GM12878 (cell line): ENCODE measurements at regions of chr6 and their contacts with region 1.

Region 1: DNA sequence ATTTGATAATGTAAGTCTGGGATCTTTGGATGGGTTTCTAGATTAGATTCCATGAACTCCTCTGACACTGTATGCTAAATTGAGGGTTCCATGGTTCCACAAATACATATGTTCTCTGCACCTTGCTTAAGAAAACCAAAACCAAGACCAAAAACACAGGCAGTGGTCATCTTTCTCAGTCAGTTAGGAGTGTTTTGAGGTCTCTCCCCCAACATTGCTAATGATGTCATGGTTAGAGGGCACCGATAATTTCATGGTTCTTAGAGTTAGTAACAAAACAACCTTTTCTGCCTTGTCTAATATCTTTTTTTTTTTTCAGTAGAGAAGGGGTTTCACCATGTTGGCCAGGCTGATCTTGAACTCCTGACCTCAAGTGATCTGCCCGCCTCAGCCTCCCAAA is 44.5 kb downstream of the ARID1B start:
- DNase-seq: no peak
- ATAC-seq: peak; percentile 68
- H3K4me3 ChIP-seq: no peak overlapping the region
- H3K27ac ChIP-seq: no peak overlapping the region
- H3K4me1 ChIP-seq: peaks cover 30% of the 10 kb centered on the region
- H3K27me3 ChIP-seq: no peaks in the 10 kb centered on the region
- CTCF ChIP-seq: no peak
- EP300 ChIP-seq: no peak
- POLR2A ChIP-seq: no peak
- RAD21 ChIP-seq: no peak

Region 2: GRCh38 chr6:156687789-156688619 is 133.7 kb before region 1 on chr6:
- CTCF ChIA-PET with region 1: no interaction called
- POLR2A ChIA-PET with region 1: no interaction called
- RAD21 ChIA-PET with region 1: no interaction called
- SMC1A ChIA-PET with region 1: no interaction called
- in situ Hi-C with region 1: no loop called
- intact Hi-C with region 1: no loop called
- DNase-seq: no peak
- ATAC-seq: peak; percentile 30
- H3K4me3 ChIP-seq: peak overlapping the region; percentile 69
- H3K27ac ChIP-seq: peak overlapping the region; percentile 98
- H3K4me1 ChIP-seq: peaks cover 51% of the 10 kb centered on the region
- H3K27me3 ChIP-seq: no peaks in the 10 kb centered on the region
- CTCF ChIP-seq: no peak; a peak in 1 of 6 replicates
- EP300 ChIP-seq: no peak
- POLR2A ChIP-seq: no peak
- RAD21 ChIP-seq: peak; percentile 26; the same call in 1 of the 2 replicates

Region 3: DNA sequence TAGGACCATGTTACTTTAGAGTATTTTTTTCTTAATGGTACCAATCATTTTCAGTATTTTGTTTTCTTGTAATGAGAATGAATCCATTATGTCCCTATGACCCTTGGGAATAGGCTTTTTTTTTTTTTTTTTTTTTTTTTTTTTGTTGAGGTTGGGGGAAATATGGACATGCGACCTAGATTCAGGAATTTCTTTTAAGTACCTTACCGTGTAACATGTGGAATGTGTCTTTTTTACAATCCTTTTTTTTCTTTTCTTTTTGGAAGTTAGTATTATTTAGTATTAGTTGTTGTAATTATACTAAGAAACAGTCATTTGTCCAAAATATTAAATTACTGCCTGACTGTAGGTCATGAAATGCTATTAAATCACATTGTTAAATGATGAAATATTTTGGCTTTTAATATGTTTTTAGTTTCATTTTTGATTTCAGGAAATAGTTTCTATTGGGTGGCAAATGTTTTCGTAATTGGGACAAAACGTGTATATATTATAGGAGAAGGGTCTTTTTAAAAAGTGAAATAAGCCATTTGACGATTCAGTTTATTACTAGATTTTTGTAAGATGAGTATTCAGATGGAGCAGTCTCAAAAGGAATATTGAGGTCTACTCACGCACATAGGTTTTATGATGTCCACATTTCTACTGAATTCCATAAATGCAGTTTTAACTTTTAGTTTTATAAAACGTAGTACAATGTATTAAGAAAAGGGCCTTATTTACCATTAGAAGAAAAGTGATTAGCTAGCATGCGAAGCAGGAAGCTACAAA is 39.7 kb before region 1 on chr6:
- CTCF ChIA-PET with region 1: interaction called, 5 read pairs
- POLR2A ChIA-PET with region 1: interaction called, 4 read pairs
- RAD21 ChIA-PET with region 1: interaction called, 11 read pairs
- SMC1A ChIA-PET with region 1: interaction called, 20 read pairs
- in situ Hi-C with region 1: no loop called
- intact Hi-C with region 1: no loop called
- DNase-seq: no peak
- ATAC-seq: no peak
- H3K4me3 ChIP-seq: peak overlapping the region; percentile 89
- H3K27ac ChIP-seq: peak overlapping the region; percentile 93
- H3K4me1 ChIP-seq: peaks cover 6% of the 10 kb centered on the region; the same call in 1 of the 2 replicates
- H3K27me3 ChIP-seq: no peaks in the 10 kb centered on the region
- CTCF ChIP-seq: no peak
- EP300 ChIP-seq: no peak
- POLR2A ChIP-seq: no peak
- RAD21 ChIP-seq: no peak

Region 4: DNA sequence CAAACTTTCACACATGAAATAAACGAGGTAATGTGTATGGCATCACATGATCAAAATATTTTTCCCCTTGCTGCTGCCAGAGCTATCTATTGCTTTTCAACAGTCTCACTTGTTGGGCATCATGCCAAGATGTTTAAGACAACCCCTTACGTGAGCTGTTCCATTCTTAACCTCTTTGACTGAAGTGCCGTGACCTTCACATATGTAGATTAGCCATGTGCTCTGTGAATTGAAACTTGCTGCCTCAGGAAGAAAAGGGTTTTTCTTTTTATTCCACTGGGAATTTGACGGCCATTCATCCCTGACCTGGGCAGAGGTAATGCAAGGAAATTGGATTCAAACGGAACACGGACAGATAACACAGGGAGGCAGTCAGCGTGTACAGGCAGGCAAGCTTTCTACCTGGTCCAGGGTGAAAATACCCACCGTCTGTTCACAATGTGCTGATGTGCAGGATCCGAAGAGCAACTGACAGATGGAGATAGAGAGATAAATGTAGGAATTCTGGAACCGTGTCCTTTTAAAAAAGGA is 30.3 kb before region 1 on chr6:
- CTCF ChIA-PET with region 1: interaction called, 5 read pairs
- POLR2A ChIA-PET with region 1: interaction called, 4 read pairs
- RAD21 ChIA-PET with region 1: interaction called, 12 read pairs
- SMC1A ChIA-PET with region 1: interaction called, 20 read pairs
- in situ Hi-C with region 1: no loop called
- intact Hi-C with region 1: no loop called
- DNase-seq: peak; percentile 72
- ATAC-seq: peak; percentile 56
- H3K4me3 ChIP-seq: peak overlapping the region; percentile 24; the same call in 1 of the 2 replicates
- H3K27ac ChIP-seq: peak overlapping the region; percentile 23
- H3K4me1 ChIP-seq: peaks cover 50% of the 10 kb centered on the region
- H3K27me3 ChIP-seq: no peaks in the 10 kb centered on the region
- CTCF ChIP-seq: no peak
- EP300 ChIP-seq: no peak
- POLR2A ChIP-seq: 0 out of 2 replicates have a peak, but pooled peaks have one; percentile 36
- RAD21 ChIP-seq: no peak

Region 5: GRCh38 chr6:156809034-156809433 is 12.7 kb before region 1 on chr6:
- CTCF ChIA-PET with region 1: interaction called, 13 read pairs
- POLR2A ChIA-PET with region 1: interaction called, 4 read pairs
- RAD21 ChIA-PET with region 1: interaction called, 3 read pairs
- SMC1A ChIA-PET with region 1: interaction called, 5 read pairs
- in situ Hi-C with region 1: no loop called
- intact Hi-C with region 1: no loop called
- DNase-seq: peak; percentile 55
- ATAC-seq: peak; percentile 98
- H3K4me3 ChIP-seq: no peak overlapping the region
- H3K27ac ChIP-seq: peak overlapping the region; percentile 27
- H3K4me1 ChIP-seq: peaks cover 24% of the 10 kb centered on the region
- H3K27me3 ChIP-seq: no peaks in the 10 kb centered on the region
- CTCF ChIP-seq: no peak
- EP300 ChIP-seq: 0 out of 4 replicates have a peak, but pooled peaks of 1 of the 2 experiments have one; percentile 13
- POLR2A ChIP-seq: 0 out of 2 replicates have a peak, but pooled peaks have one; percentile 35
- RAD21 ChIP-seq: no peak

Region 6: DNA sequence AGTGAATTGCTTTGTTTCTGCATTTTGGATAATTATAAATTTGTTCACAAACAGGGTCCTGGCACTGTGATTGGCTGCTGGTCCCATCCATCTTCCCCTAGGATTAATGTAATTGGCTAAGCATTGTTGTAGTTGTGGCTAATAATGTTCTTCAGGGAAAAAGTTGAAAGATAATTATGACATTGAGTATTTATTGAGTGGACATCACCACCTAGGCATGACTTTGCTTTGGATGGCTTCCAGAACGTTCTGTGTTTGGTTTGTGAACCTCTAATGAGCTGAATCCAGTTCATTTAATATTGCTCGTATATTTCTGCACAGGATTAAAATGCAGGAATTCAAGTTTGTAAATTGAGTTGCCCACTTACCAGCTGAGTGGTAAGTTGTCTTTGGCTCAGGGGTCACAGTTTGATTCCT is 10.5 kb after region 1 on chr6:
- CTCF ChIA-PET with region 1: interaction called, 4 read pairs
- POLR2A ChIA-PET with region 1: no interaction called
- RAD21 ChIA-PET with region 1: interaction called, 14 read pairs
- SMC1A ChIA-PET with region 1: interaction called, 12 read pairs
- in situ Hi-C with region 1: no loop called
- intact Hi-C with region 1: no loop called
- DNase-seq: no peak
- ATAC-seq: peak; percentile 52; the same call in 1 of the 3 replicates
- H3K4me3 ChIP-seq: no peak overlapping the region
- H3K27ac ChIP-seq: no peak overlapping the region
- H3K4me1 ChIP-seq: peaks cover 2% of the 10 kb centered on the region; the same call in 1 of the 2 replicates
- H3K27me3 ChIP-seq: no peaks in the 10 kb centered on the region
- CTCF ChIP-seq: no peak
- EP300 ChIP-seq: no peak
- POLR2A ChIP-seq: no peak
- RAD21 ChIP-seq: no peak

Region 7: DNA sequence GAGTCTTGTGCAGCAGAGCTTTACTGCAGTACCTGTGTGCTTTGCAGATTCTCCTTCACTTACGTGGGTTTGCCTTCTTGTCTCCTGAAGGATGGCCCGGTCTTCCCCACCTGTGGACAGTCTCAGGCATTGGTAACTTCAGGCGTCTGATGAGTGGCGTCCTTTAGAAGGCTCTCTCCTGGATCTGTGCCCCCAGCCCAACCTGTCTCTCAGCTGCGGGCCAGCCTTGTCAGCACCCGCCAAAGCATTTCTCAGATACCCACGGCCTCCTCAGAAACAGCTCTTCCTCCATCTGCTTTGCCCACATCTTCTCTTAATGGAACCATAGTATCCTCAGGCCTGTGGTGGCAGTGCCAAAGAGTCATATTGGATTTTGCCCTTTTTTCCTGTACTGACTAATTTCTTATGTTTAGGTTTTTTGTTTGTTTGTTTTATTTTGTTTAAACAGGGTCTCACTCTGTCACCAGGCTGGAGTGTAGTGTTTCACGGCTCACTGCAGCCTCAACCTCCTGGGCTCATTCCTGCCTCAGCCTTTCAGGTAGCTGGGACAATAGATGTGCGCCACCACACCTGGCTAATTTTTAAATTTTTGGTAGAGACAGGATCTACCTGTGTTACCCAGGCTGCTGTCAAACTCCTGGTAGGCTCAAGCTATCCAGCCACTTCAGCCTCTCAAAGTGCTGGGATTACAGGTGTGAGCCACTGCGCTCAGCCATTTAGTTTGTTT is 52.1 kb after region 1 on chr6:
- CTCF ChIA-PET with region 1: no interaction called
- POLR2A ChIA-PET with region 1: no interaction called
- RAD21 ChIA-PET with region 1: no interaction called
- SMC1A ChIA-PET with region 1: no interaction called
- in situ Hi-C with region 1: no loop called
- intact Hi-C with region 1: no loop called
- DNase-seq: no peak
- ATAC-seq: no peak
- H3K4me3 ChIP-seq: no peak overlapping the region
- H3K27ac ChIP-seq: no peak overlapping the region
- H3K4me1 ChIP-seq: no peaks in the 10 kb centered on the region
- H3K27me3 ChIP-seq: no peaks in the 10 kb centered on the region
- CTCF ChIP-seq: no peak
- EP300 ChIP-seq: no peak
- POLR2A ChIP-seq: no peak
- RAD21 ChIP-seq: no peak

Region 8: GRCh38 chr6:157034436-157035230 is 212.9 kb after region 1 on chr6:
- CTCF ChIA-PET with region 1: no interaction called
- POLR2A ChIA-PET with region 1: no interaction called
- RAD21 ChIA-PET with region 1: no interaction called
- SMC1A ChIA-PET with region 1: no interaction called
- in situ Hi-C with region 1: no loop called
- intact Hi-C with region 1: no loop called
- DNase-seq: no peak
- ATAC-seq: peak; percentile 75
- H3K4me3 ChIP-seq: no peak overlapping the region
- H3K27ac ChIP-seq: no peak overlapping the region
- H3K4me1 ChIP-seq: peaks cover 6% of the 10 kb centered on the region
- H3K27me3 ChIP-seq: no peaks in the 10 kb centered on the region
- CTCF ChIP-seq: peak; percentile 52 to 60 (median 55)
- EP300 ChIP-seq: no peak
- POLR2A ChIP-seq: no peak
- RAD21 ChIP-seq: peak; percentile 70